Activated CD4-positive, alpha-beta T cell treated with anti-CD3 and anti-CD28 coated beads, Interleukin-2, amount 10 ng/mL, durations not matched to agents 24 days and 14 days (primary cell): ENCODE measurements at regions of chr3 and their contacts with region 1.

Region 1: GRCh38 chr3:197906023-197906849 is 43.8 kb upstream of the RPL35A start:
- DNase-seq: peak; percentile 93
- H3K4me3 Mint-ChIP-seq: peak overlapping the region; percentile 41
- H3K27ac Mint-ChIP-seq: peak overlapping the region; percentile 91
- H3K4me1 Mint-ChIP-seq: peaks cover 21% of the 10 kb centered on the region
- H3K27me3 Mint-ChIP-seq: no peaks in the 10 kb centered on the region

Region 2: GRCh38 chr3:197878427-197878826 is 27.8 kb before region 1 on chr3:
- intact Hi-C with region 1: loop called (anchors 1 kb)
- DNase-seq: peak; percentile 83
- H3K4me3 Mint-ChIP-seq: peak overlapping the region; percentile 64
- H3K27ac Mint-ChIP-seq: peak overlapping the region; percentile 92
- H3K4me1 Mint-ChIP-seq: peaks cover 16% of the 10 kb centered on the region
- H3K27me3 Mint-ChIP-seq: no peaks in the 10 kb centered on the region

Region 3: GRCh38 chr3:197942956-197943556 is 36.8 kb after region 1 on chr3:
- intact Hi-C with region 1: loop called (anchors 1 kb)
- DNase-seq: peak; percentile 78
- H3K4me3 Mint-ChIP-seq: no peak overlapping the region
- H3K27ac Mint-ChIP-seq: no peak overlapping the region
- H3K4me1 Mint-ChIP-seq: peaks cover 1% of the 10 kb centered on the region
- H3K27me3 Mint-ChIP-seq: peaks cover 2% of the 10 kb centered on the region

Region 4: GRCh38 chr3:197959898-197960693 is 53.9 kb after region 1 on chr3 and contains the start of gene LMLN:
- intact Hi-C with region 1: loop called (anchors 1 kb)
- DNase-seq: peak; percentile 99
- H3K4me3 Mint-ChIP-seq: peak within 1 kb of the TSS; percentile 96
- H3K27ac Mint-ChIP-seq: peak within 1 kb of the TSS; percentile 96
- H3K4me1 Mint-ChIP-seq: peaks cover 42% of the 10 kb centered on the region
- H3K27me3 Mint-ChIP-seq: peaks cover 5% of the 10 kb centered on the region
- total RNA-seq, gene LMLN: 5.5 and 5.9 TPM in 2 replicates

Region 5: GRCh38 chr3:198080521-198081280 is 174.5 kb after region 1 on chr3:
- intact Hi-C with region 1: loop called (anchors 1 kb)
- DNase-seq: peak; percentile 95
- H3K4me3 Mint-ChIP-seq: peak overlapping the region; percentile 87
- H3K27ac Mint-ChIP-seq: peak overlapping the region; percentile 89
- H3K4me1 Mint-ChIP-seq: peaks cover 9% of the 10 kb centered on the region
- H3K27me3 Mint-ChIP-seq: peaks cover 57% of the 10 kb centered on the region